Activated CD4-positive, alpha-beta T cell treated with anti-CD3 and anti-CD28 coated beads for 36 hours (primary cell): ENCODE measurements at regions of chr2 and their contacts with region 1.

Region 1: DNA sequence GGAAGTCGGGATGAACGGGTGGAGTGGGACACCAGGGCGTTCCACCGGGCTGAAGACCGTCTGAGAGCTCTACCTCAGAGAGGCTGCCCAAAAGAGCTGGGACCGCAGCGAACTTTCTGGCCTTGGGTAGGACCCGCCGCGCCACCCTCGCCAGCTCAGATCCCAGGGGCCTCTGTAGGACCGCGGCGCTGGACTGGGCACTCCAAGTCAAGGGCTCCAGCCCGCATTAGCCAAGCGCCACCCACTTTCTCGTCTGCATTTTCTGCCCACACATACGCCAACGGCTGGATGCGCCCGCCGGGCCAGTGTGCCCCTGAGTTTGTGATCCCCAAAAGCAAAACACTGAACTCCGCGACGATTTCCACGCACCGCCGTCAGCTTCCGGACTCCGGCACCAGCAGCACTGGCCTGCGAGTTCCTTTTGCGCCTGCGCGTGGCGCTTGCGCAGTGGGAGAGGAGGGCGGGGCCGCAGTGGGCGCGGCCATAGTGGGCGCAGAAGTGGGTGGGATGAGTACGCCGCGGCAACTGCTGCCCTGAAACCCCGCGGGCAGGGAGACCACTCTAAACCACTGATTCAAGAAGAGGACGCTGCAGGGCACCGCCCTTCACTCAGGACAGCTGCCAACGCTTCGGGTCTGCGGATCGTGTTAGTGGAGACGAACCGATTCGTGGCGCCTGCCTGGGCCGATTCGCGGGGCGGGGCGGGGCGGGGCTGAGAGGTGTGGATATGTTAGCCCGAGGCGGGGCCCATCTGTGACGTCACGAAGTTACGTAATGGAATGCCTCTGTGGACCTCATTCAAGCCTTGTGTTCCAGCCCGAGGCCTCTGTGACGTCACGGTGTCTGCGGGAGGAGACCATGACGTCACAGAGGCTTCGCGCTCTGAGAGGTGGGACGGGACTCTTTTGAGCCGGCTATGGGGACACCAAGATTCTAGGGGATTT is 10.5 kb downstream of the OSR1 start:
- DNase-seq: peak; percentile 97
- ATAC-seq: peak; percentile 92
- H3K4me3 Mint-ChIP-seq: peak overlapping the region; percentile 89
- H3K27ac Mint-ChIP-seq: peak overlapping the region; percentile 98
- H3K4me1 Mint-ChIP-seq: peaks cover 22% of the 10 kb centered on the region
- H3K27me3 Mint-ChIP-seq: peaks cover 27% of the 10 kb centered on the region

Region 2: GRCh38 chr2:18560031-18560796 is 787.7 kb before region 1 on chr2 and contains the start of gene RDH14:
- CTCF ChIA-PET with region 1: no interaction called
- POLR2A ChIA-PET with region 1: no interaction called
- intact Hi-C with region 1: loop called (anchors 1 kb)
- DNase-seq: peak; percentile 94
- ATAC-seq: peak; percentile 94
- H3K4me3 Mint-ChIP-seq: peak within 1 kb of the TSS; percentile 84
- H3K27ac Mint-ChIP-seq: peak within 1 kb of the TSS; percentile 90
- H3K4me1 Mint-ChIP-seq: peaks cover 32% of the 10 kb centered on the region
- H3K27me3 Mint-ChIP-seq: no peaks in the 10 kb centered on the region
- total RNA-seq, gene RDH14: 16.1 to 18.3 TPM

Region 3: DNA sequence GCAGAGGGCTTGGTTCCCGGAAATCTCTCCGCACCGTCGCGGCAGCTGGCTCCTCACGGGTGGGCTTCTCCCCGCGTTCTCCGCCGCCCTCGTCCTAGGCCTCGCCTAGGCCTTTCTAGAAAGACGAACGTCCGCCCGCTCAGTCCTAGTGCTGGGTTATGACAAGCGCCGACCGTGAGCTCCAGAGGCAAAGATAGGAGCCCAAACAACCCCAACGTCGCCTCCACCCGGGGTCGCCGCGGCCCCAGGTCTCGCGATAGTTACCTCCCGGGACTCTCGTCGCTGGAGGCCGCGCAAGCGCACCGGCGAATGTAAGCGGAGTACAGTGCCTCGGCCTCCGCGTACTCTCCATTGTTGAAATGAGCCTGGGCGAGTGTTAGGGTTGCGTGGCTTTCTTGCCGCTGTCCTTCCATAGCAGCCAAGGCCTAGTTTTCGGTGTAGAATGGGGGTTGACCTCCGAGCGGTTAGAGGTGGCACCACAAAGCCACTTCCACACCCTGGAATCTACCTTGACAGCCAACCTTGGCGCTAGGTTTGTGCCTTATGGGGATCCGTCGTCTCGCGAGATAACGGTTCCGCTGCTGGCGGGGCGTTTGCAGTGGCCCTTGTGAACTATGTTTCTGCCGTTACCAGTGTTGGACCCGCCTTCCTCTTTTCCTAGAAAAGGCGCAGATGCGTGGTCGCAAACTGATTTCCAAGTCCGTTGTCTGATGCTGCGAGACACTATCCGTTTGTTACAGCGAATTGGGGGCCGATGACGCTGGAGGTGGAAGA is 553.7 kb after region 1 on chr2 and contains the start of gene TTC32:
- CTCF ChIA-PET with region 1: no interaction called
- POLR2A ChIA-PET with region 1: no interaction called
- intact Hi-C with region 1: loop called (anchors 1 to 5 kb)
- DNase-seq: peak; percentile 95
- ATAC-seq: peak; percentile 88
- H3K4me3 Mint-ChIP-seq: peak within 1 kb of the TSS; percentile 84
- H3K27ac Mint-ChIP-seq: peak within 1 kb of the TSS; percentile 93
- H3K4me1 Mint-ChIP-seq: peaks cover 46% of the 10 kb centered on the region
- H3K27me3 Mint-ChIP-seq: peaks cover 11% of the 10 kb centered on the region
- total RNA-seq, gene TTC32: 8.8 to 15.7 TPM

Region 4: GRCh38 chr2:20350753-20351554 is 1003.1 kb after region 1 on chr2 and contains the start of gene PUM2:
- CTCF ChIA-PET with region 1: no interaction called
- POLR2A ChIA-PET with region 1: no interaction called
- intact Hi-C with region 1: loop called in 1 of 2 experiments (anchors 5 kb)
- DNase-seq: peak; percentile 97
- ATAC-seq: peak; percentile 85
- H3K4me3 Mint-ChIP-seq: no peak within 1 kb of the TSS
- H3K27ac Mint-ChIP-seq: peak within 1 kb of the TSS; percentile 88
- H3K4me1 Mint-ChIP-seq: peaks cover 25% of the 10 kb centered on the region
- H3K27me3 Mint-ChIP-seq: no peaks in the 10 kb centered on the region
- total RNA-seq, gene PUM2: 78.4 to 112 TPM

Region 5: GRCh38 chr2:20666304-20667150 is 1318.6 kb after region 1 on chr2 and contains the start of gene GDF7:
- CTCF ChIA-PET with region 1: no interaction called
- POLR2A ChIA-PET with region 1: no interaction called
- intact Hi-C with region 1: loop called in 1 of 2 experiments (anchors 5 kb)
- DNase-seq: peak; percentile 41
- ATAC-seq: peak; percentile 23
- H3K4me3 Mint-ChIP-seq: peak within 1 kb of the TSS; percentile 69
- H3K27ac Mint-ChIP-seq: no peak within 1 kb of the TSS
- H3K4me1 Mint-ChIP-seq: peaks cover 3% of the 10 kb centered on the region
- H3K27me3 Mint-ChIP-seq: peaks cover 55% of the 10 kb centered on the region
- total RNA-seq, gene GDF7: 0.02 TPM in 1 of 2 experiments, not detected in the other